HCT116 (cell line): ENCODE measurements at regions of chr1 and their contacts with region 1.

Region 1: DNA sequence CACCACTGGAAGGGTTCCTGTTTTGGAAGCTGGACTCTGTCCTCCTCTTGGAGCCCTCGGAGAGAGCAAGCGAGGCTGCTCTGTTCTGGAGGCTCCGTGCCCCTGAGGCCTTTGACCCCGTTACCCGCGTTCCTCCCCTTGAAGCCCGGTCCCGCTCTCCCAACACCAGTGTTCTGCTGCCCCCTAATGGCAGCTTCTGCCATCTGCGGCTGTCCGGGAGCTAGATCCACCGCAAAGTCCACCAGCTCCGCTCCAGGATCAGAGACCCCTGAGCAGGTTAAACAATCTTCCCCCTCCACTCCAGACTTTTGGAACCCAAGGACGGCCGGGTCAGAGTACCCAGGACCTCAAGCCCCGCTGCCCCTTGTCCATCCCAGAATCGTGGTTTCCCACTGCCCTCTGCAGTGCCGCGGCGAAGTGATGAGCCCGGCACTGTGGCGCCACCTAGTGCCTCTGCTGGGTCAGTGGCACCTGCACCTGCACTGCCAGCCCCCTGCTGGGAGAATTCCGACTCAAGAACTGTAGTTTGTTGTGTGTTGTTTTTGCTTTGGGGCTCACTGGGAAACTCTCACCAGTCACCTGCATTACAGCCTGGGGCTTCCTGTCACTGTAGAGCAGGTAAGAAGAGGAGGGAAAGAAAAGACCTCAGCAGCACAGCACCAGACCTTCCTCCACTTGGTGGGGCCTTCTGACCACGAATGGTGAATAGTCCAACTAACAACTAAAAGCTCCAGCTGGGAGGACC is 63.5 kb upstream of the NFASC start:
- DNase-seq: peak; percentile 76
- ATAC-seq: peak; percentile 94
- H3K4me3 ChIP-seq: peak overlapping the region; percentile 42 to 61
- H3K27ac ChIP-seq: no peak overlapping the region
- H3K4me1 ChIP-seq: peaks cover 0 to 12% of the 10 kb centered on the region in 2 experiments; a peak in 2 of 4 replicates
- H3K27me3 ChIP-seq: peaks cover 8% of the 10 kb centered on the region; the same call in 1 of the 2 replicates
- CTCF ChIP-seq: peak; percentile 99 to 100 (median 99)
- POLR2A ChIP-seq: no peak
- RAD21 ChIP-seq: peak; percentile 92

Region 2: DNA sequence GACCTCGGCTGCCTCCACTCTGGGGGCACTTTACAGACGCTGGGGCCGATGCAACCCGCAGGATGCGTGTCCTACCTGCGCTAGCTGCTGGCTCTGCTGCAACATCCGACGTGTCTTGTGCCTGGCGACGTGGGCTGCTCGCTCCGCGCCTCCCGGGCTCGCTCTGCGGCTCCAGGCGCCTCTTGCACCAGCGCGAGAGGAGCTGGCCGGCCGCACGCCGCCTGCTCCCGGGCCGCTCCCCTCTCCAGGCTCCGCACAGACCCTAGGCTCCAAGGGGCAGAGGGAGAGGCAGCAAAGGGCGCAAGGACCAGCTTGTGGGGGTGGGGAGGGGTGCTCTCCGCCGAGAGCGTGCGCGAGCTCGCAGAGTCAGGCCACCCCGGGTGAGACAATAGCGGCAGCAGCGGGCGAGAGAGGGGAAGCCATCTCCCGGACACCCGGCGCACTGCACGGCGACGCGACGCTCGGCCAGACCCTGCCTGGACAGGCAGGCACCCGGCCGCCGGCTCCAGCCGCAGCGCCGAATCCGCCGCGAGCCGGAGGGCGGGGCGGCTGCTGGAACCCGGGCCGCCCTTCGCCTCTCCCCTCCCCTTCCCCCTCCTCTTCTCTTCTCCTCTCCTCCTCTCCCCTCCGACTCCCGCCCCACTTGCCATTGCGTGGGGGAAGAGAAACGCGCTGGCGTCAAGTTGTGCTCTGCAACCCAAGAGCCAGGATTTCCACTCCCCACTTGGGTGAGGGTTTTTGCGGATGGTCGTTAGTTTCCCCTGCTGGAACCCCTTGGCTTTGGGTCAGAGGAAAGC is 312.6 kb before region 1 on chr1 and contains the start of gene PIK3C2B:
- CTCF ChIA-PET with region 1: interaction called, 10 read pairs
- POLR2A ChIA-PET with region 1: no interaction called
- RAD21 ChIA-PET with region 1: no interaction called
- intact Hi-C with region 1: no loop called
- DNase-seq: peak; percentile 52
- ATAC-seq: peak; percentile 87
- H3K4me3 ChIP-seq: peak within 1 kb of the TSS; percentile 80 to 94
- H3K27ac ChIP-seq: peak within 1 kb of the TSS; percentile 97
- H3K4me1 ChIP-seq: peaks cover 17 to 36% of the 10 kb centered on the region in 2 experiments
- H3K27me3 ChIP-seq: no peaks in the 10 kb centered on the region
- CTCF ChIP-seq: peak in 2 of 3 experiments; percentile 25 to 29; a peak in 3 of 6 replicates
- POLR2A ChIP-seq: peak; percentile 68
- RAD21 ChIP-seq: peak; percentile 36; the same call in 1 of the 2 replicates
- total RNA-seq, gene PIK3C2B: 17.4 TPM

Region 3: GRCh38 chr1:204565617-204566582 is 241.2 kb before region 1 on chr1:
- CTCF ChIA-PET with region 1: interaction called, 192 read pairs
- POLR2A ChIA-PET with region 1: interaction called, 6 read pairs
- RAD21 ChIA-PET with region 1: interaction called, 21 to 29 read pairs
- intact Hi-C with region 1: loop called (anchors 1 kb)
- DNase-seq: peak; percentile 68
- ATAC-seq: peak; percentile 83
- H3K4me3 ChIP-seq: 0 out of 4 replicates have a peak overlapping the region, but pooled peaks of 1 of the 2 experiments have one; percentile 2
- H3K27ac ChIP-seq: no peak overlapping the region
- H3K4me1 ChIP-seq: peaks cover 21 to 35% of the 10 kb centered on the region in 2 experiments
- H3K27me3 ChIP-seq: no peaks in the 10 kb centered on the region
- CTCF ChIP-seq: peak; percentile 55 to 96 (median 72)
- POLR2A ChIP-seq: no peak
- RAD21 ChIP-seq: peak; percentile 89

Region 4: GRCh38 chr1:204763706-204764427 is 43.2 kb before region 1 on chr1:
- CTCF ChIA-PET with region 1: interaction called, 12 read pairs
- POLR2A ChIA-PET with region 1: no interaction called
- RAD21 ChIA-PET with region 1: interaction called, 4 to 7 read pairs
- intact Hi-C with region 1: no loop called
- DNase-seq: peak; percentile 52
- ATAC-seq: peak; percentile 99
- H3K4me3 ChIP-seq: no peak overlapping the region; a peak in 1 of 4 replicates
- H3K27ac ChIP-seq: no peak overlapping the region
- H3K4me1 ChIP-seq: peaks cover 8 to 26% of the 10 kb centered on the region in 2 experiments; a peak in 3 of 4 replicates
- H3K27me3 ChIP-seq: peaks cover 9% of the 10 kb centered on the region; the same call in 1 of the 2 replicates
- CTCF ChIP-seq: peak; percentile 91 to 95 (median 94)
- POLR2A ChIP-seq: no peak
- RAD21 ChIP-seq: peak; percentile 88

Region 5: GRCh38 chr1:204826970-204827369 is 19.9 kb after region 1 on chr1:
- CTCF ChIA-PET with region 1: interaction called, 25 read pairs
- POLR2A ChIA-PET with region 1: no interaction called
- RAD21 ChIA-PET with region 1: no interaction called
- intact Hi-C with region 1: no loop called
- DNase-seq: no peak
- ATAC-seq: peak; percentile 75
- H3K4me3 ChIP-seq: no peak overlapping the region
- H3K27ac ChIP-seq: no peak overlapping the region
- H3K4me1 ChIP-seq: peaks cover 2 to 3% of the 10 kb centered on the region in 2 experiments; a peak in 2 of 4 replicates
- H3K27me3 ChIP-seq: peaks cover 18% of the 10 kb centered on the region
- CTCF ChIP-seq: peak; percentile 53 to 66 (median 58)
- POLR2A ChIP-seq: no peak
- RAD21 ChIP-seq: peak; percentile 54

Region 6: DNA sequence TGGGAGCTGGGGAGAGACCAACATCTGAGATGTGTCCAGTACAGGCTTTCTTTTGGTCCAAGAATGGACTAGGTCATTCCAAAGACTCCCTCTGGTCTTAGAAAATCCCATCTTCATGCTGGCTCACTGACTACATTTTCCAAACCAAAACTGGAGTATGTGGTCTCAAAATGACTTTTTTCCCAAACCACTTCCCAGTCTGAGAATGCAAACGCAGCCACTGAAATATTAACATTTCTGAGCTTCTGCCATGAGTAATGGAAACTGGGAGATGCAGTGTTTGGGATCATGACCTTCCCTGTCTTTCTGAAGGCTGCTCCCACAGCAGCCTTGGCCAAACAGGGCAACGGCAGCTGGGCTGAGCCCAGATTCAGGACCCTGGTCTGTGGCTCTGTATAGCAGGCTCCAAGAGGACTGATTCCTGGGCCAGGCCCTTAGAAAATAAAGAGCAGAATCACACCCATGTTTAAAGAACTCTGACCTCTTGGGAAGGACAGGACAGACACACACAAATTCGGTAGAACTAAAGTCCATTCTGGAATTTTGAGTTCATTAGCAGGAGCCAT is 173.8 kb after region 1 on chr1:
- CTCF ChIA-PET with region 1: no interaction called
- POLR2A ChIA-PET with region 1: no interaction called
- RAD21 ChIA-PET with region 1: no interaction called
- intact Hi-C with region 1: no loop called
- DNase-seq: no peak
- ATAC-seq: no peak
- H3K4me3 ChIP-seq: no peak overlapping the region
- H3K27ac ChIP-seq: no peak overlapping the region
- H3K4me1 ChIP-seq: no peaks in the 10 kb centered on the region
- H3K27me3 ChIP-seq: peaks cover 12% of the 10 kb centered on the region; the same call in 1 of the 2 replicates
- CTCF ChIP-seq: no peak
- POLR2A ChIP-seq: no peak
- RAD21 ChIP-seq: no peak

Region 7: DNA sequence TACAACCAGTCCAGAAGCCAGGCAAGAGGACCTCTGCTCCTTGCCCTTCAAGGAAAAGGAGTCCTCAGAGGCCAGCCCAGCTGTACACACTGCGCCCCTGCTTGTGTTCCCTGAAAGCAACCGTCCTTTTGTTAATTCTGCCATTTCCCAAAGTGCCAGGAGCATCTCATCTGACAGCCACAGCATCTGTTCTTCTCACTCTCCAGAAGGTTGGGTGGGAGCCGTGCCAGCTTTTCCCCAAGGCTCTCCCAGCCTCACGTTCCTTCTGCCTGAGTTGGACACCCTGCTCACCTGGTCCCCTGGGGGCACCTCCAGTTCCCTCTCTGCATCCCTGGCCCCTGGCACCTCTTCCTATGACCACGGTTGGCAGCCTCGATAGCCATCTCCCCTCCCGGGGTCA is 225.4 kb after region 1 on chr1:
- CTCF ChIA-PET with region 1: no interaction called
- POLR2A ChIA-PET with region 1: no interaction called
- RAD21 ChIA-PET with region 1: no interaction called
- intact Hi-C with region 1: no loop called
- DNase-seq: no peak
- ATAC-seq: no peak
- H3K4me3 ChIP-seq: no peak overlapping the region
- H3K27ac ChIP-seq: no peak overlapping the region
- H3K4me1 ChIP-seq: no peaks in the 10 kb centered on the region
- H3K27me3 ChIP-seq: no peaks in the 10 kb centered on the region
- CTCF ChIP-seq: no peak
- POLR2A ChIP-seq: no peak
- RAD21 ChIP-seq: no peak

Region 8: GRCh38 chr1:205255941-205256780 is 449.0 kb after region 1 on chr1:
- CTCF ChIA-PET with region 1: interaction called, 15 read pairs
- POLR2A ChIA-PET with region 1: no interaction called
- RAD21 ChIA-PET with region 1: no interaction called
- intact Hi-C with region 1: loop called (anchors 1 kb)
- DNase-seq: peak; percentile 69
- ATAC-seq: peak; percentile 92
- H3K4me3 ChIP-seq: no peak overlapping the region
- H3K27ac ChIP-seq: no peak overlapping the region
- H3K4me1 ChIP-seq: peaks cover 17 to 36% of the 10 kb centered on the region in 2 experiments
- H3K27me3 ChIP-seq: no peaks in the 10 kb centered on the region
- CTCF ChIP-seq: peak; percentile 88 to 96 (median 95)
- POLR2A ChIP-seq: no peak
- RAD21 ChIP-seq: peak; percentile 99